WTC11 (cell line): ENCODE measurements at regions of chr3 and their contacts with region 1.

Region 1: DNA sequence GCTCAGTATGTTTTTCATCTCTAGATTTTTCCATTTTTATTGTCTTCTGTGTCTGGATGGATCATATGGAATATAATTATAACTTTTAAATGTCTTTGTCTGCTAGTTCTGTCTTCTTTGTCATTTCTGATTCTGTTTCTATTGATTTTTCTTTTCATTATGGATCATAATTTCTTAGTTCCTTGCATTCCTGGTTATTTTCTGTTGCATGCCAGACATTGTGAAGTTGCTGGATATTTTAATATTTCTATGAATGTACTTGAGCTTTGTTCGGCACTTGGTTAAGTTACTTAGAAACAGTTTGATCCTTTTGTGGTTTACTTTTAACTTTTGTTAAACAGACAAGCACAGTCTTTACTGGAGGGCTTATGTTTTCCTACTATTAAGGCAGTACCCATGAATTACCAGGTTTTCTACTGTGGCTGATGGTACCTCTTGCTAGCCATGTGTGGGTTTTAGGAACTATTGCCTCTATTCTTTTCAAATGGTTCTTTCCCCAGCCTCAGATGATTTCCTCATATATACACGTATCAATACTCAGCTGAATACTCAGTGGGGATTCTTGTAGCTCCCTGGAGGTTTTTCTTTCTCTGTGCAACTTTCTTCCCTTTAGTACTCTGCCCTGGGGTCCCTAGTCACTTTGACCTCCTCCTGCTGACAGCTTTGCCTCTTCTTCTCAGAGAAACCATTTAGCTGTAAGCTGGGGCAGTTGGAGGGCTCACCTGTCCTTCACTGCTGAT is 64.3 kb downstream of the RASA2 start:
- DNase-seq: no peak
- ATAC-seq: no peak
- H3K4me3 Mint-ChIP-seq: no peak overlapping the region
- H3K27ac Mint-ChIP-seq: no peak overlapping the region
- H3K4me1 Mint-ChIP-seq: no peaks in the 10 kb centered on the region
- H3K27me3 Mint-ChIP-seq: no peaks in the 10 kb centered on the region
- CTCF ChIP-seq: no peak

Region 2: GRCh38 chr3:141575879-141576743 is 25.0 kb after region 1 on chr3:
- CTCF ChIA-PET with region 1: no interaction called
- POLR2A ChIA-PET with region 1: no interaction called
- DNase-seq: no peak
- ATAC-seq: peak; percentile 44; the same call in 1 of the 2 replicates
- H3K4me3 Mint-ChIP-seq: no peak overlapping the region
- H3K27ac Mint-ChIP-seq: peak overlapping the region; percentile 16
- H3K4me1 Mint-ChIP-seq: no peaks in the 10 kb centered on the region
- H3K27me3 Mint-ChIP-seq: no peaks in the 10 kb centered on the region
- CTCF ChIP-seq: no peak

Region 3: DNA sequence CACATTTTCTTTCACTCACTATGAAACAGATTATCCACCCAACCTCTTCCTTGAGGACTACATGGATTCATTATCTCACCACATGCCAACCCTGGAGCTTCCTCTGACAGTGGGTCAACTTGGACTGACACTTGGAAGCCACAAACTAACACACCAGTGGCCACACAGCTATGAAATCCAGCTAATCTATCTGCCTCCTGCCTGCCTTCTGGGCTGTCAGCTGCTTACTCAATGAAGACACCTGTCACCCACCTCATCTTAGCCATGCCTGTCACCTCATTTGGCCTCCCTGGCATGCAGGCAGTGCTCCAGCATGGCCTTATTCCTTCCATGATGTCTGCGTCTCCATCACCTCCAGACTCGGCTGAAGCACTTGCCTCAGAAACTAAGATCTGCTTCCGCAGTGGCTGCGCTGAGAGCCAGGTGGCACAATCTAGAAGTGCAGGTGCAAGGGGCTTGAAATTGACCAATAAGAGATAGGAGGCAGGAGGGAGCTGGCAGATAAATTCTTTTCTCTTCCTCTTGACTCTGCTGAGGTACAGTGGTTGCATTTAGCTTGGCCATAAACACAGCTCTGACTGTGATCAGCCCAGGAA is 81.8 kb after region 1 on chr3:
- CTCF ChIA-PET with region 1: no interaction called
- POLR2A ChIA-PET with region 1: interaction called, 10 read pairs
- DNase-seq: no peak
- ATAC-seq: peak; percentile 98
- H3K4me3 Mint-ChIP-seq: no peak overlapping the region
- H3K27ac Mint-ChIP-seq: no peak overlapping the region
- H3K4me1 Mint-ChIP-seq: peaks cover 4% of the 10 kb centered on the region
- H3K27me3 Mint-ChIP-seq: no peaks in the 10 kb centered on the region
- CTCF ChIP-seq: no peak